ENCODE measurements at regions of chr11 and their contacts with region 1.

Region 1: GRCh38 chr11:12693479-12694181 is 19.4 kb downstream of the TEAD1 start:
- DNase-seq: peak; percentile 60
- ATAC-seq: peak; percentile 76

Region 2: DNA sequence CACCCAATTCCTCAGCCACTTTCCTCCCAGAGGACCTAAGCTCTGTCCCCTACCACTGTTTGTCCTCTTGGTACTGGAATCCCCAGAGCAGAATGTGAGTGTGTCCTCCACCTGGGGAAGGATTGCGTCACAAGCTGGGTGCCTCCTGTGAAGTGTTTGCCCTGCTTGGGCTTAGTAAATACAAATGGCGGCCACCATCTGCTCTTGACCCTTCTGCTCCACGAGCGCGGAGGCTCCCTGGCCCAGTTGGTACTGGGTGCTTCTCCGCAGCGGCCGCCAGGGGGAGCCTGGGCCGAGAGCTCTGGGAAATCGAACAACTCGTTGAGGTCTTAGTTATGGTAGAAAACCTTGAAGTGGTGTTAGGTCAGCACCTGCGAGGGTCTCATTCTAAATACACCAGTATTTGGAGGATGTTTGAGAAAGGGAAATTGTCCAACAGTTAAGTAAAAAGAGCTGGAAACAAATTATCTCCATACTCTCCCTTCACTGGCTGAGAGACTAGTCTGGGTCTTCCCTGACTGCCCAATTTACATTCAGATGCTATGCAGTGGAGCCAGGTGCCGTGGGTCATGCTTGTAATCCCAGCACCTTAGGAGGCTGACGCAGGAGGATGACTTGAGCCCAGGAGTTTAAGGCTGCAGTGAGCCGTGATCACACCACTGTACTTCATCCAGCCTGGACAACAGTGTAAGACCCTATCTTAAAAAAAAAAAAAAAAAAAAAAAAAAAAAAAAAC is 94.1 kb before region 1 on chr11:
- intact Hi-C with region 1: no loop called
- DNase-seq: peak; percentile 69
- ATAC-seq: peak; percentile 79

Region 3: DNA sequence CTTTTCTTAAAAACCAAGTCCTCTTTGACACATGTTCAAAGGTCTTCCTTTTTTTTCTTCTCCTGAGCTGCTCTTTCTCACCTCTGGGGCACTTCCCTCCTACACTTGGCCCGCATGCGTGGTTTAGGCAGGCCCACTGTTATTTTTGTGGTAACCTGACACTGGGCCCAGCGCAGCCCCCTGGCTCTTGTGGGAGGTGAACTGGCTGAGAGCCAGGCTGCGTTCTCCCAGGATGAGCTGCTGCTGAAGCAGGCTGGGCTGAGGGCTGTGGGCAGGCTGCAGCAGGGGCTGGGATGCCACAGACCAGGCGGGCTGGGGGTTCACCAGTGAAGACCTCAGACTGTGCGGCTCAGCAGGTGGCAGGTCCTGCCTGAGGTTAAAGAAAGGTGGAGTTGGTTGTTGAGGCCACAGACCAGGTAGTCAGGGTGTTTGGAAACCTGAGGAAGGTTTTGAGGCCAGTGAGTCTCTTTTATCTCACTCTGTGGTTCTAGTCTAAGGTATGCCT is 53.0 kb after region 1 on chr11:
- intact Hi-C with region 1: loop called (anchors 10 kb)
- DNase-seq: peak; percentile 88
- ATAC-seq: peak; percentile 75

Measured in left ventricle myocardium superior (tissue), 1 donor.